Activated T-helper 2 cell treated with anti-CD3 and anti-CD28 coated beads, Interferon-gamma antibody, Interleukin-2, Interleukin-4, amounts not matched to agents 10 μg/mL and 5 μg/mL and 100 μg/mL, durations not matched to agents 14 hours and 24 hours and 36 hours (primary cell): ENCODE measurements at regions of chr3 and their contacts with region 1.

Region 1: DNA sequence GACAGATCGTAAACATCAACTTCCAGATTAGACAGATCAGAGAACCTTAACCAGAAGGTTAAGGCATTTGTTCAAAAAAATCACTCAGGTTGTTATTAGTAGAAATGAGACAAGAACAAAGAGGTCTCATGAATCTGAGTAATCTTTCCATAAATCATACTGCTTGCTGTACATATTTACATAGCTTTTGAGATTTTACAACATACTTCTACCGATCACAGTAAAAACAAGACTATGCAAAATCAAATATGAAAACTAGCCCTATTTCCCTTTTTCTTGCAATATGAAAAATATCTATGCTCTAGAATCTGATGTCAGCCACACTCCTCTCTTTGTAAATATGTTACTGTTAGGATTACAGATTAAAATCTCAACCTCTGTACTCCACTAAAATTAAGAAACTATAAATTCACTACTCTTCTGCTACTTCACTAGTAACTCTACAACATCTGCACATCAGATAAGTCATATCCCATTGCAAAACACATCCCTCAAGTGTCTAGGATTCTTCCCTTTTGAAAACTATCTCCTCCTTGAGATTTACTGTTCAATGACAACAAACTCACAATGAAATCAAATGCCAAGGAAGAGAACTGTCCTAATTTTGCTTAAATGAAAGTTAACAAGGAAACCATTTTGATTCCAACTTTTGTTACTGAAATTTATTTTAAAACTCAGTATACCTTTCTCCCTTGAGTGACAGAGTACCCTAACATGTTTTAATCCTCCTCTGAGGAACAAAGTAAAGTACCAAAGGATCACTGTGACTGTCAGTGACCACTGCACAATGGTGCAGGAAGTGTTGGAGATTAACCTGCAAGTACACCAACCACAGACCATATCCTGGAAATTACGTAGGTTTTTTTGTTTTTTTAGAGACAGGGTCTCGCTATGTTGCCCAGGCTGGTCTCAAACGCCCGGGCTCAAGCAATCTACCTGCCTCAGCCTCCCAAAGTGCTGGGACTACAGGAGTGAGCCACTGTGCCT is 12.8 kb downstream of the DCUN1D1 start:
- DNase-seq: no peak
- H3K4me3 Mint-ChIP-seq: peak overlapping the region; percentile 46
- H3K27ac Mint-ChIP-seq: peak overlapping the region; percentile 76
- H3K4me1 Mint-ChIP-seq: peaks cover 39% of the 10 kb centered on the region
- H3K27me3 Mint-ChIP-seq: no peaks in the 10 kb centered on the region

Region 2: GRCh38 chr3:183099026-183099837 is 131.7 kb after region 1 on chr3 and contains the start of gene MCCC1:
- intact Hi-C with region 1: loop called (anchors 10 kb)
- DNase-seq: peak; percentile 97
- H3K4me3 Mint-ChIP-seq: peak within 1 kb of the TSS; percentile 96
- H3K27ac Mint-ChIP-seq: peak within 1 kb of the TSS; percentile 92
- H3K4me1 Mint-ChIP-seq: peaks cover 28% of the 10 kb centered on the region
- H3K27me3 Mint-ChIP-seq: no peaks in the 10 kb centered on the region
- total RNA-seq, gene MCCC1: 25.8 and 31.2 TPM in 2 replicates